Activated B cell treated with CpG ODN at 0.5 μM for 24 hours (primary cell): ENCODE measurements at regions of chr4 and their contacts with region 1.

Region 1: GRCh38 chr4:105146276-105147015 is at the start of gene TET2:
- DNase-seq: peak; percentile 72
- ATAC-seq: peak; percentile 80
- H3K4me3 Mint-ChIP-seq: peak within 1 kb of the TSS; percentile 99
- H3K27ac Mint-ChIP-seq: peak within 1 kb of the TSS; percentile 98
- H3K4me1 Mint-ChIP-seq: peaks cover 51% of the 10 kb centered on the region
- H3K27me3 Mint-ChIP-seq: no peaks in the 10 kb centered on the region
- CTCF ChIP-seq: no peak
- total RNA-seq, gene TET2: 39.7 and 51.2 TPM in 2 replicates

Region 2: DNA sequence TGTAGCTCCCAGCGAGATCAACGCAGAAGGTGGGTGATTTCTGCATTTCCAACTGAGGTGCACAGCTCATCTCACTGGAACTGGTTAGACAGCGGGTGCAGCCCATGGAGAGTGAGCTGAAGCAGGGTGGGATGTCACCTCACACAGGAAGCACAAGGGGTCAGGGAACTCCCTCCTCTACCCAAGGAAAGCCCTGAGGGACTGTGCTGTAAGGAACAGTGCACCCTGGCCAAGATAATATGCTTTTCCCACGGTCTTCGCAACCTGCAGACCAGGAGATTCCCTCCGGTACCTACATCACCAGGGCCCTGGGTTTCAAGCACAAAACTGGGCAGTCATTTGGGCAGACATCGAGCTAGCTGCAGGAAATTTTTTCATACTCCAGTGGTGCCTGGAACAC is 216.1 kb before region 1 on chr4:
- CTCF ChIA-PET with region 1: no interaction called
- POLR2A ChIA-PET with region 1: no interaction called
- intact Hi-C with region 1: loop called (anchors 2 kb)
- DNase-seq: no peak
- ATAC-seq: no peak
- H3K4me3 Mint-ChIP-seq: no peak overlapping the region
- H3K27ac Mint-ChIP-seq: peak overlapping the region; percentile 63
- H3K4me1 Mint-ChIP-seq: peaks cover 27% of the 10 kb centered on the region
- H3K27me3 Mint-ChIP-seq: no peaks in the 10 kb centered on the region
- CTCF ChIP-seq: no peak

Region 3: DNA sequence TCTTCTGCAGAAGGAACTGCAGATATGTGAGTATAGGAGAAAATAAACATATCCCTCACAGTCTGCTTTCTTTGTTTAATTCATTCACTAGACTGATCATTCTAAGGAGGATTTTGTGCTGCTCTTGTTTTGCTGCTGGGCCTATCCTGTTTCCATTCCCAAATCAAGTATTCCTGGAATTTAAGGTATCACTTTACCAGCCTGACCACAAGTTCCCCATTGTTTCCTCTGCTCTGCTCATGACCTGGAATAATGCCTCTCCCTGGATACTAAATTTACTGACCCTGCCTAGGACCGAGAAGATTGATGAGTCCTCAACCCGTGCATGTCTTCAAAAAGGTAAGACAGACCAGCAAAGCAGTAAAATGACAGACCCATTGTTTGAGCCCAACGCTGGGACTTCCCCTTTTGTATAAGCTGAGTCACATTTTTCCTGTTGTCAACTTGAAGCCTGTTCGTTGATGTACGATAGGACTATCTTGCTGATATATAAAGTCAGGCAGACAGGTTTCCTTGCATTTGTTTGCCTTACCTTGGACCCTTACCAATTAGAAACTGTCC is 85.2 kb before region 1 on chr4:
- CTCF ChIA-PET with region 1: no interaction called
- POLR2A ChIA-PET with region 1: interaction called, 5 read pairs
- intact Hi-C with region 1: loop called (anchors 1 kb)
- DNase-seq: no peak
- ATAC-seq: peak; percentile 43
- H3K4me3 Mint-ChIP-seq: peak overlapping the region; percentile 74
- H3K27ac Mint-ChIP-seq: peak overlapping the region; percentile 87
- H3K4me1 Mint-ChIP-seq: peaks cover 46% of the 10 kb centered on the region
- H3K27me3 Mint-ChIP-seq: no peaks in the 10 kb centered on the region
- CTCF ChIP-seq: no peak

Region 4: GRCh38 chr4:105135785-105136184 is 10.7 kb before region 1 on chr4:
- CTCF ChIA-PET with region 1: no interaction called
- POLR2A ChIA-PET with region 1: no interaction called
- intact Hi-C with region 1: no loop called
- DNase-seq: no peak
- ATAC-seq: no peak
- H3K4me3 Mint-ChIP-seq: no peak overlapping the region
- H3K27ac Mint-ChIP-seq: no peak overlapping the region
- H3K4me1 Mint-ChIP-seq: no peaks in the 10 kb centered on the region
- H3K27me3 Mint-ChIP-seq: no peaks in the 10 kb centered on the region
- CTCF ChIP-seq: no peak

Region 5: DNA sequence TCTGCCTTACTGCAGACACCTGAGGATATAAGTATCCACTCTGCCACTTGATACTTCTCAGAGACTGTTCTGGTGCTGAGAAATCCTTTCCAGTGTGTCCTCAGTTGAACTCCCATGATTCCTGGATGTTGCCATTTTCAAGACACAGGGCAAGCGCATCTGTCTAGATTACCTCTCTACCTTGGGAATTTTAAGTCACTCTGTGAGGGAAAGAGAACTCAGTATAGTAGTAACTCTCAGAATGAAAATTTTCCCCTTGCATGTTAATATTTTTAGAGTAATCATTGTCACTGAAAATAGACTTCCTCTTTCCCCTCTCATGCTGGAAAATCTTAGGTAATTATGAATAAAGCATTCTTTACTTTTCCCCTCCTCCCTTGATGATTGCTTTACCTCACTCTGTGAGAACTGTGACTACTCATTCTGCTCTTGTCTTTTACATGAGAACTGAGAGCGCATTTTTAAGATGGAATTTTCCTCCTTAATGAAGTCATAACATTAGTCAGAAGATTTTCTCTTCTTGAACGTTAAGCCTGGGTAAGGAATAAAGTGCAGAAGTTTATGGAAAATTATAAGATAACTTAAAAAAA is 45.3 kb after region 1 on chr4:
- CTCF ChIA-PET with region 1: no interaction called
- POLR2A ChIA-PET with region 1: interaction called, 4 read pairs
- intact Hi-C with region 1: loop called (anchors 1 kb)
- DNase-seq: no peak
- ATAC-seq: peak; percentile 73
- H3K4me3 Mint-ChIP-seq: peak overlapping the region; percentile 25
- H3K27ac Mint-ChIP-seq: peak overlapping the region; percentile 77
- H3K4me1 Mint-ChIP-seq: peaks cover 79% of the 10 kb centered on the region
- H3K27me3 Mint-ChIP-seq: no peaks in the 10 kb centered on the region
- CTCF ChIP-seq: no peak

Region 6: DNA sequence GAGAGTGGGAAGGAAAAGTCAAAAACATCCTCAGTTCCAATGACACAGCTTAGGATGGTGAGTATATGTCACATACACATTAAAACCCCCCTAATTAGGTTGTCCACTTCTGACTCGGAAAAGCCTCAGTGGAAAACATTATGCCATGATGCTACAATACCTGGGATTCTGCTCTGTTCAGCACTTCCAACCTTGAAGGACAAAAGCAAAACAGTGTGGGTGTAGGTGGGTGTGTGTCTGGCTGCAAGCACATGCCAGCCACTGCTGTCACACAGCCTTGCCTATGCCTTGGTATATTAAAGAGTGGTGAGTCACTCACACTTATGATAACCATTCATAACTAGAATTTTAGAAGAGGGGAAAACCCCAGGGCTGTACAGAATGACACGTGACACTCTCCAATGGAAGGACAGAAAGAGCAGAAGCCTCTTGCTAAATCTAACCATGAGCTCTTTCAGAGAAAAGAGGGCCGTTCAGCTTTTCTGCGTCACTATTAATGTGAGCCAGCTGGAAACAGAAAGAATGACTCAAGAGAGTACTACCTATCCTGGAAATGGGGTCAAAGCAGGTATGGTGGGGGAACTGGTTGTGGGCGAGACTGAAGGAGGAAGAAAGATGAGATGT is 159.8 kb after region 1 on chr4:
- CTCF ChIA-PET with region 1: no interaction called
- POLR2A ChIA-PET with region 1: interaction called, 6 read pairs
- intact Hi-C with region 1: loop called (anchors 1 kb)
- DNase-seq: no peak
- ATAC-seq: peak; percentile 93
- H3K4me3 Mint-ChIP-seq: peak overlapping the region; percentile 74
- H3K27ac Mint-ChIP-seq: peak overlapping the region; percentile 90
- H3K4me1 Mint-ChIP-seq: peaks cover 22% of the 10 kb centered on the region
- H3K27me3 Mint-ChIP-seq: no peaks in the 10 kb centered on the region
- CTCF ChIP-seq: no peak

Region 7: DNA sequence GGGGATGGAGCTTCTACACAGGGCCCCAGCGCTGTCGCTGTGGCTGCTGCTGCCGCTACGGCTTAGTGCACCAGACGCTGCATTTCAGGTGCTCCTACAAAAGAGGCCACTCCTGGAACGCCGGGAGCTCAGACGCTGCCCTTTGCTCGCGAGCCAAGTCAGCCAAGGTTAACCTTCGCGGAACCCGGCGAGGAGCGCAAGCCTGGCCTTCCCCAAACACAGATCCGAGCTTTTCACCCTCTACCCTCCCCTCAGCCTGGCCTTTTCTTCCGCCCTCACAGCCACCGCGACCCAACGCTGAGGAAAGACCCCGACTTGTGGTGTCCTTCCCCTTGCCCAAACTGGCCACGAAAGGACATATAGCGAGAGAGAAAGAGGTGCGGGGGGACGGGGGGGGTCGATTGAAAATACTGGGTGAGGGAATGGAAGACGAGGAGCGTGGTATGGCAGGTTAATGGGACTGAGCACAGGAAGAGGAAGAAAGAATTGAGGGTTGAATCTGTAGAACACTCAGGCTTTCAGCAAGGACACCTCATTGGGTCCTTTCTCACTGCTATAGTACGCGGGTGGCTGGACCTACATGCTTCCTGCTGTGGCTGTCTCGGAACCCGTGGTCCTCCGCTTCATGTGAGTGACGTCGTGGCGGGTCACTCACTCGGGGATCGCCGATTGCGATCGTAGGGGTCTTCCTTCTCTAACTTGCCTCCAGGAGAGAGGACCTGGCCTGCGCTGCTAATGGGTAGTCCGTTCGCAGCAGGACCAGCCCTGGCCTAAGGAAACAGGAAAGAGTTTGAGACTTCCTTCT is 1169.7 kb after region 1 on chr4 and contains the starts of genes AIMP1 and TBCK:
- CTCF ChIA-PET with region 1: no interaction called
- POLR2A ChIA-PET with region 1: no interaction called
- intact Hi-C with region 1: loop called (anchors 1 kb)
- DNase-seq: peak; percentile 78
- ATAC-seq: peak; percentile 90
- H3K4me3 Mint-ChIP-seq: no peak within 1 kb of the TSS
- H3K27ac Mint-ChIP-seq: no peak within 1 kb of the TSS
- H3K4me1 Mint-ChIP-seq: peaks cover 35% of the 10 kb centered on the region
- H3K27me3 Mint-ChIP-seq: no peaks in the 10 kb centered on the region
- CTCF ChIP-seq: no peak
- total RNA-seq, gene AIMP1: 49.4 and 53.5 TPM in 2 replicates
- total RNA-seq, gene TBCK: 45.6 and 60.1 TPM in 2 replicates